B cell (primary cell): ENCODE measurements at regions of chr2 and their contacts with region 1.

Region 1: GRCh38 chr2:222548992-222549391 is 106.9 kb downstream of the FARSB start:
- DNase-seq: no peak
- ATAC-seq: no peak
- H3K4me3 ChIP-seq: no peak overlapping the region
- H3K4me3 Mint-ChIP-seq: no peak overlapping the region
- H3K27ac ChIP-seq: no peak overlapping the region
- H3K27ac Mint-ChIP-seq: no peak overlapping the region
- H3K4me1 ChIP-seq: no peaks in the 10 kb centered on the region
- H3K4me1 Mint-ChIP-seq: no peaks in the 10 kb centered on the region
- H3K27me3 ChIP-seq: peaks cover 0 to 5% (median 0%) of the 10 kb centered on the region in 4 experiments
- H3K27me3 Mint-ChIP-seq: no peaks in the 10 kb centered on the region
- CTCF ChIP-seq: no peak

Region 2: GRCh38 chr2:222538535-222538934 is 10.5 kb before region 1 on chr2:
- CTCF ChIA-PET with region 1: no interaction called
- POLR2A ChIA-PET with region 1: interaction called, 13 read pairs
- intact Hi-C with region 1: no loop called
- DNase-seq: no peak
- ATAC-seq: no peak
- H3K4me3 ChIP-seq: no peak overlapping the region
- H3K4me3 Mint-ChIP-seq: no peak overlapping the region
- H3K27ac ChIP-seq: no peak overlapping the region
- H3K27ac Mint-ChIP-seq: no peak overlapping the region
- H3K4me1 ChIP-seq: no peaks in the 10 kb centered on the region
- H3K4me1 Mint-ChIP-seq: no peaks in the 10 kb centered on the region
- H3K27me3 ChIP-seq: no peaks in the 10 kb centered on the region
- H3K27me3 Mint-ChIP-seq: no peaks in the 10 kb centered on the region
- CTCF ChIP-seq: no peak